Caco-2 (cell line): ENCODE measurements at regions of chr5 and their contacts with region 1.

Region 1: GRCh38 chr5:165209086-165209727 is 1703.8 kb downstream of the MAT2B start:
- DNase-seq: peak in 1 of 2 experiments; percentile 41
- H3K4me3 ChIP-seq: no peak overlapping the region
- H3K4me3 Mint-ChIP-seq: no peak overlapping the region
- H3K27ac Mint-ChIP-seq: no peak overlapping the region
- H3K4me1 ChIP-seq: peaks cover 5% of the 10 kb centered on the region; the same call in 1 of the 2 replicates
- H3K4me1 Mint-ChIP-seq: no peaks in the 10 kb centered on the region
- H3K27me3 ChIP-seq: no peaks in the 10 kb centered on the region
- H3K27me3 Mint-ChIP-seq: no peaks in the 10 kb centered on the region
- CTCF ChIP-seq: peak; percentile 27 to 61

Region 2: DNA sequence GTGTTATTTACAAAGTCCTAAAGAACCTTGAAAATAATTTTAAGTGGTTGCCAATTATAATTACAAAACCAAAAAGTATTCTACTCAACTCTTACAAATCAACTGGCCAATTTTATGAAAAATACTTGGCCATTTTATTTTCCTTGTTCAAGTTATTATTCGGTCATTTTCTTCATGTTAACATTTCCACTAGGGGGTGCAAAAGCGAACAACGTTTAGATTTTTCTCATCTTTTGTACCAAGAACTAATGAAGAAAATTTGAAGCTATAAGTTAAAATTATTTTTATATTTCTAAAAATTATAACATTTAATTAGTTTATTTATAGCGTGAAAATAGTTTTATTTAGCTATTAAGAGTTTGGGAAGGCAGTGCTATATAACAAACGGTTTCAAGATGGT is 250.5 kb before region 1 on chr5:
- CTCF ChIA-PET with region 1: no interaction called
- POLR2A ChIA-PET with region 1: no interaction called
- intact Hi-C with region 1: loop called (anchors 2 kb)
- DNase-seq: no peak
- H3K4me3 ChIP-seq: no peak overlapping the region
- H3K4me3 Mint-ChIP-seq: no peak overlapping the region
- H3K27ac Mint-ChIP-seq: no peak overlapping the region
- H3K4me1 ChIP-seq: no peaks in the 10 kb centered on the region
- H3K4me1 Mint-ChIP-seq: no peaks in the 10 kb centered on the region
- H3K27me3 ChIP-seq: no peaks in the 10 kb centered on the region
- H3K27me3 Mint-ChIP-seq: no peaks in the 10 kb centered on the region
- CTCF ChIP-seq: peak; percentile 14 to 23

Region 3: GRCh38 chr5:165029099-165029870 is 179.9 kb before region 1 on chr5:
- CTCF ChIA-PET with region 1: no interaction called
- POLR2A ChIA-PET with region 1: interaction called, 3 read pairs
- intact Hi-C with region 1: loop called (anchors 1 kb)
- DNase-seq: peak; percentile 38 to 56
- H3K4me3 ChIP-seq: no peak overlapping the region
- H3K4me3 Mint-ChIP-seq: no peak overlapping the region
- H3K27ac Mint-ChIP-seq: no peak overlapping the region
- H3K4me1 ChIP-seq: no peaks in the 10 kb centered on the region
- H3K4me1 Mint-ChIP-seq: no peaks in the 10 kb centered on the region
- H3K27me3 ChIP-seq: no peaks in the 10 kb centered on the region
- H3K27me3 Mint-ChIP-seq: no peaks in the 10 kb centered on the region
- CTCF ChIP-seq: peak; percentile 21 to 47